ENCODE measurements at regions of chr4 and their contacts with region 1.

Region 1: GRCh38 chr4:26342328-26343037 is 21.7 kb downstream of the RBPJ start:
- DNase-seq: no peak
- H3K4me3 Mint-ChIP-seq: no peak overlapping the region
- H3K27ac Mint-ChIP-seq: no peak overlapping the region
- H3K4me1 Mint-ChIP-seq: peaks cover 57% of the 10 kb centered on the region
- H3K27me3 Mint-ChIP-seq: no peaks in the 10 kb centered on the region

Region 2: GRCh38 chr4:26356081-26356501 is 13.6 kb after region 1 on chr4:
- intact Hi-C with region 1: loop called (anchors 2 kb)
- DNase-seq: no peak
- H3K4me3 Mint-ChIP-seq: no peak overlapping the region
- H3K27ac Mint-ChIP-seq: no peak overlapping the region
- H3K4me1 Mint-ChIP-seq: peaks cover 30% of the 10 kb centered on the region
- H3K27me3 Mint-ChIP-seq: no peaks in the 10 kb centered on the region

Region 3: GRCh38 chr4:26459054-26459755 is 116.7 kb after region 1 on chr4:
- intact Hi-C with region 1: no loop called
- DNase-seq: no peak
- H3K4me3 Mint-ChIP-seq: no peak overlapping the region
- H3K27ac Mint-ChIP-seq: no peak overlapping the region
- H3K4me1 Mint-ChIP-seq: peaks cover 13% of the 10 kb centered on the region
- H3K27me3 Mint-ChIP-seq: peaks cover 2% of the 10 kb centered on the region

Measured in activated T-helper 1 cell treated with anti-CD3 and anti-CD28 coated beads, Interleukin-12 subunit alpha, Interleukin-12 subunit beta, Interleukin-2, Interleukin-4 antibody, amounts not matched to agents 30 ng/mL and 10 ng/mL and 1 ng/mL, durations not matched to agents 14 hours and 24 hours and 36 hours (primary cell).